CD4-positive, alpha-beta T cell (primary cell): ENCODE measurements at regions of chr9 and their contacts with region 1.

Region 1: GRCh38 chr9:129835021-129835871 is at the starts of genes C9orf78 and USP20:
- DNase-seq: peak; percentile 94 to 100 (median 98)
- ATAC-seq: peak; percentile 89
- H3K4me3 ChIP-seq: peak within 1 kb of the TSS; percentile 95
- H3K4me3 Mint-ChIP-seq: peak within 1 kb of the TSS; percentile 100
- H3K27ac ChIP-seq: peak within 1 kb of the TSS; percentile 92 to 94
- H3K27ac Mint-ChIP-seq: peak within 1 kb of the TSS; percentile 92
- H3K4me1 ChIP-seq: peaks cover 55% of the 10 kb centered on the region
- H3K4me1 Mint-ChIP-seq: peaks cover 66% of the 10 kb centered on the region
- H3K27me3 ChIP-seq: no peaks in the 10 kb centered on the region
- H3K27me3 Mint-ChIP-seq: no peaks in the 10 kb centered on the region
- CTCF ChIP-seq: no peak
- total RNA-seq, gene C9orf78: 145 to 159 TPM
- total RNA-seq, gene USP20: 80.4 to 80.9 TPM

Region 2: DNA sequence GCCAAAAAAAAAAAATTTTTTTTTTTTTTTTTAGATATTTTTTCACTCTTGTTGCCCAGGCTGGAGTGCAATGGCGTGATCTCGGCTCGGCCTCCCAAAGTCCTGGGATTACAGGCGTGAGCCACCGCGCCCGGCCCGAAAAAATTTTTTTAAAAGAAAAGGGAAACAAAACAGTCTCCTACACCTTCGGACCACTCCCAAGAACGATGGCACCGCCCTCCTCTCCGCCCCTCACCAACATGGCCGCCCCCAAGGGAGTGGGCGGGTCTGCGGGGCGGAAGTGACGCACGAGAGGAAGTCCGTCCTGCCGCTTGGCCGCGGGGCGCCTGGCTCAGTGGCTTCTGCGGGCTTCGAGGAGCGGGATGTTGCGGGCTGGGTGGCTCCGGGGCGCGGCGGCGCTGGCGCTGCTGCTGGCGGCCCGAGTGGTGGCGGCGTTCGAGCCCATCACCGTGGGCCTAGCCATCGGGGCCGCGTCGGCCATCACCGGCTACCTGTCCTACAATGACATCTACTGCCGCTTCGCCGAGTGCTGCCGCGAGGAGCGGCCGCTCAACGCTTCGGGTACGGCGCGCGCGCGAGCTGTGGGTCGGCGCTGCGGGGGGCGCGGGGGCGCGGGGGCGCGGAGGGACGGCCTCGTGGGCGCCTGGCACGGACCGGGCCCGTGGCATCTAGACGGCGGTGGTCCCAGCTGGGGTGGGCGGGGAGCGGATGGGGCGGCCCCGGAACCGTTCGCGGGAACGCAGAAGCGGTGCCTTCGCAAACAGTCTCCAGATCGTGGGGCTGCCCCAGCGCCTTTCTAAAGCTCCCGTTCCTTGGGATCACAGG is 32.2 kb before region 1 on chr9 and contains the start of gene TOR1B:
- CTCF ChIA-PET with region 1: no interaction called
- POLR2A ChIA-PET with region 1: interaction called, 6 read pairs
- intact Hi-C with region 1: loop called (anchors 1 kb)
- DNase-seq: peak; percentile 87 to 97 (median 94)
- ATAC-seq: peak; percentile 92
- H3K4me3 ChIP-seq: peak within 1 kb of the TSS; percentile 81
- H3K4me3 Mint-ChIP-seq: peak within 1 kb of the TSS; percentile 91
- H3K27ac ChIP-seq: peak within 1 kb of the TSS; percentile 49 to 77
- H3K27ac Mint-ChIP-seq: peak within 1 kb of the TSS; percentile 86
- H3K4me1 ChIP-seq: peaks cover 25% of the 10 kb centered on the region
- H3K4me1 Mint-ChIP-seq: peaks cover 24% of the 10 kb centered on the region
- H3K27me3 ChIP-seq: no peaks in the 10 kb centered on the region
- H3K27me3 Mint-ChIP-seq: no peaks in the 10 kb centered on the region
- CTCF ChIP-seq: no peak
- total RNA-seq, gene TOR1B: 13.4 to 15.1 TPM

Region 3: DNA sequence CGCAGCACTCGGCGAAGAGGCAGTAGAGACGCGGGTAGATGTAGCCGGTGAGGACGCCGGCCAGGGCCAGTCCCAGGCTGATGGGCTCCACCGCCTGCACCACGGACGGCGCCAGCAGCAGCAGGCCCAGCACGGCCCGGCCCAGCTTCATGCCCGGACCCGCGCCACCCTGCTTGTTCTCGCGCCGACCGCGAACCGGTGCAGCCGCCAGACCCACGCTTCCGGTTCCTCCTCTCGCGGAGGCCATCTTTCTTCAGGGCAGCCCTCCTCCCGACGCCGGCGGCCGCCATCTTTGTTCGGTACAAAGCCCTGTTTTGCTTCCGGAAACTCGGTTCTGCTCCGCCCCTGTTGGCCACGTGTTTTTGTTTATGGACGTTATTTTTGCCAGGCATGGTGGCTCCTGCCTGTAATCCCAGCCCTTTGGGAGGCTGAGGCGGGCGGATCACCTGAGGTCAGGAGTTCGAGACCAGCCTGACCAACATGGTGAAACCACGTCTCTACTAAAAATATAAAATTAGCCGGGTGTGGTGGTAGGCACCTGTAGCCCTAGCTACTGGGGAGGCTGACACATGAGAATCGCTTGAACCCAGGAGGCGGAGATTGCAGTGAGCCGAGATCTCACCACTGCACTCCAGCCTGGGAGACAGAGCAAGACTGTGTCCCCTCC is 11.2 kb before region 1 on chr9 and contains the start of gene TOR1A:
- CTCF ChIA-PET with region 1: no interaction called
- POLR2A ChIA-PET with region 1: interaction called, 7 read pairs
- intact Hi-C with region 1: loop called in 1 of 2 experiments (anchors 1 kb)
- DNase-seq: peak; percentile 85 to 95 (median 90)
- ATAC-seq: peak; percentile 95
- H3K4me3 ChIP-seq: peak within 1 kb of the TSS; percentile 64
- H3K4me3 Mint-ChIP-seq: peak within 1 kb of the TSS; percentile 94
- H3K27ac ChIP-seq: peak within 1 kb of the TSS in 1 of 2 donors; percentile 46
- H3K27ac Mint-ChIP-seq: peak within 1 kb of the TSS; percentile 81
- H3K4me1 ChIP-seq: peaks cover 14% of the 10 kb centered on the region
- H3K4me1 Mint-ChIP-seq: peaks cover 12% of the 10 kb centered on the region
- H3K27me3 ChIP-seq: no peaks in the 10 kb centered on the region
- H3K27me3 Mint-ChIP-seq: no peaks in the 10 kb centered on the region
- CTCF ChIP-seq: no peak
- total RNA-seq, gene TOR1A: 12.6 to 13.9 TPM

Region 4: DNA sequence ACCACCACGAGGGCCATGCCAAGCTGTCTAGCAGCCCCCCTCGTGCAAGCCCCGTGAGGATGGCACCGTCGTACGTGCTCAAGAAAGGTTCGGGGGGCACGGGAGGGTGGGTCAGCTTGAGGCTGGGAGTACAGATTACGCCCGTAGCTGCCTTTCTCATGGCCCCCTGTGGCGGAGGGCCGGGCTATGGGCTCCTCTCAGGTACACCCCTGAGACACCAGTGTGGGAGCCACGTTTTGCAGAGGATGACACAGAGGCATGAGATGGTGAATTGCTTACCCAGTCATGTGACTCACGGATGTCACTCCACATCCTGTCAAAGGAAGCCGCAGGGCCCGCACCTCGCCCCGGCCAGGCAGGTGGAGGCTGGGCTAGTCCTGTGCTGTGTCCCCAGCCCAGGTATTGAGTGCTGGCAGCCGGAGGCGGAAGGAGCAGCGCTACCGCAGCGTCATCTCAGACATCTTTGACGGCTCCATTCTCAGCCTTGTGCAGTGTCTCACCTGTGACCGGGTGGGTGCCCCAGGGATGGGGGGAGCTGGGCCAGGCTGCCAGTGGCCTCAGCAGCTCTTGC is 33.8 kb after region 1 on chr9:
- CTCF ChIA-PET with region 1: interaction called, 8 read pairs
- POLR2A ChIA-PET with region 1: interaction called, 33 read pairs
- intact Hi-C with region 1: loop called (anchors 1 to 2 kb)
- DNase-seq: peak; percentile 85 to 98 (median 92)
- ATAC-seq: peak; percentile 87
- H3K4me3 ChIP-seq: peak overlapping the region; percentile 40
- H3K4me3 Mint-ChIP-seq: peak overlapping the region; percentile 59
- H3K27ac ChIP-seq: peak overlapping the region; percentile 93 to 96
- H3K27ac Mint-ChIP-seq: peak overlapping the region; percentile 86
- H3K4me1 ChIP-seq: peaks cover 94% of the 10 kb centered on the region
- H3K4me1 Mint-ChIP-seq: peaks cover 75% of the 10 kb centered on the region
- H3K27me3 ChIP-seq: no peaks in the 10 kb centered on the region
- H3K27me3 Mint-ChIP-seq: no peaks in the 10 kb centered on the region
- CTCF ChIP-seq: no peak

Region 5: DNA sequence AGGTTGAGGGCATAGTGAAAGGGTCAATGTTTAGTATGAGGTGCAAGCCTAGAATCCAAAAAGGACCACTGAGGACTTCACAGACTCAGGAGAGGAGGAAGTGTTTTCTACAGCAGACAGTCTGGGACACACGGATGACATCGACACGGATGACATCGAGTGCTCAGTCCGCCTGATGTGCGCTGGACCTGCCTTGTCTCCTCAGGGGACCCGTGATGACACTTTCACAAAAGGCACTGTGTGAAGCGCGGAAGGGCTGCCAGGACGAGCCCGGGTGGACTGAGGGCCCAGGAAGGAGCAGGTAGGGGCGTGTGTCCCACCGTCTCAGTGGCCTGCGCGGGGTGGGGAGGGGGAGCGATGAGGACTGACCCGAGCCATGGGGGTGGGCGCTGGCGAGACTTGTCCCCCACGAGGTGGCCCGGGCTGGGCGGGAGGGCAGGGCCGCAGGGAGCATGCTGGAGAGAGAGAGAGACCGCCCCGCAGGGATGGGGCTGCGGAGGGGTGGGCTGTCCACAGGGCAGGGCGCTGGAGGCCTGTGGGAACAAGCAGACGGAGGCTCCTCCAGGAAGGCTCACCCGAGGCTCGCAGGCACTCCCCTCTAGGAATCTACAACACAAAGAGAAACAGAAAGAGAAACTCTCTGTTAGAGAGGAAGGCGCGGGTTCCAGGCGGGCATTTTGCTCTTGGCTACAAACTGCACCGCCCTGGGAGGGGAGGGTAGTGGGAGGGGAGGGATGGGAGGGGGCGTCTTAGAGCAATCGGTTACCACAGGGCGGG is 54.9 kb after region 1 on chr9:
- CTCF ChIA-PET with region 1: interaction called, 4 read pairs
- POLR2A ChIA-PET with region 1: interaction called, 134 read pairs
- intact Hi-C with region 1: loop called in 1 of 2 experiments (anchors 1 kb)
- DNase-seq: peak; percentile 46 to 91 (median 64)
- ATAC-seq: no peak
- H3K4me3 ChIP-seq: peak overlapping the region; percentile 50
- H3K4me3 Mint-ChIP-seq: peak overlapping the region; percentile 96
- H3K27ac ChIP-seq: peak overlapping the region; percentile 91 to 99
- H3K27ac Mint-ChIP-seq: peak overlapping the region; percentile 99
- H3K4me1 ChIP-seq: peaks cover 98% of the 10 kb centered on the region
- H3K4me1 Mint-ChIP-seq: peaks cover 87% of the 10 kb centered on the region
- H3K27me3 ChIP-seq: no peaks in the 10 kb centered on the region
- H3K27me3 Mint-ChIP-seq: no peaks in the 10 kb centered on the region
- CTCF ChIP-seq: no peak

Region 6: GRCh38 chr9:129910628-129911567 is 75.7 kb after region 1 on chr9:
- CTCF ChIA-PET with region 1: no interaction called
- POLR2A ChIA-PET with region 1: no interaction called
- intact Hi-C with region 1: no loop called
- DNase-seq: peak in 1 of 14 experiments; percentile 51
- ATAC-seq: no peak
- H3K4me3 ChIP-seq: no peak overlapping the region
- H3K4me3 Mint-ChIP-seq: no peak overlapping the region
- H3K27ac ChIP-seq: no peak overlapping the region
- H3K27ac Mint-ChIP-seq: peak overlapping the region; percentile 66
- H3K4me1 ChIP-seq: peaks cover 3% of the 10 kb centered on the region
- H3K4me1 Mint-ChIP-seq: peaks cover 29% of the 10 kb centered on the region
- H3K27me3 ChIP-seq: no peaks in the 10 kb centered on the region
- H3K27me3 Mint-ChIP-seq: no peaks in the 10 kb centered on the region
- CTCF ChIP-seq: no peak

Region 7: DNA sequence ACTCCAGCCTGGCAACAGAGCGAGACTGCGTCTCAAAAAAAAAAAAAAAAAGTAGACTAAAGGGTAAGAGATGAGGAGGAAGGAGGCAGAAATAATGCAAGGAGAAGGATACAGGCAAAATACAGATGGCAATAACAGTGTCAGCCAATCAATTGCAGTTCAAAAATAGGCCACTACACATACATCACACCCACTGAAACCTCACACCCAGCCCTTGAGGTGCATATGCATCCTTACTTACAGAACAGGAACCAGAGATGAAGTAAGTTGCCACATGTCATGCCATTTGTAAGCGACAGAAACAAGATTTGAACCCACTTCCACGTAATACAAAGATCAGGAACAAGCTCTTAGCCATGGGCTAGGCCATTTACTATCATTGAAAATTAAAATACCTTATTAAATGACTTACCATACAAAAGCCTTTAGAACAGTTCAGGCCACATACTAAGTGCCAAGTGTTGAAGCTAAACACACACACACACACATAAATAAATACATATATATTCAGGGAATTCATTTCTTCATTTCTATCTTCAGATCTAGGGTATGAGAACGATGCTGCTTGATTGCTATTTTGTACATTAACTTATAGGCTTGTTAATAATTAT is 109.4 kb after region 1 on chr9:
- CTCF ChIA-PET with region 1: no interaction called
- POLR2A ChIA-PET with region 1: no interaction called
- intact Hi-C with region 1: loop called in 1 of 2 experiments (anchors 10 kb)
- DNase-seq: peak in 13 of 14 experiments; percentile 22 to 92 (median 33)
- ATAC-seq: peak; percentile 90
- H3K4me3 ChIP-seq: no peak overlapping the region
- H3K4me3 Mint-ChIP-seq: peak overlapping the region; percentile 56
- H3K27ac ChIP-seq: peak overlapping the region; percentile 12 to 58
- H3K27ac Mint-ChIP-seq: peak overlapping the region; percentile 76
- H3K4me1 ChIP-seq: peaks cover 46% of the 10 kb centered on the region
- H3K4me1 Mint-ChIP-seq: peaks cover 67% of the 10 kb centered on the region
- H3K27me3 ChIP-seq: no peaks in the 10 kb centered on the region
- H3K27me3 Mint-ChIP-seq: no peaks in the 10 kb centered on the region
- CTCF ChIP-seq: no peak